ENCODE measurements at regions of chr12 and their contacts with region 1.

Region 1: GRCh38 chr12:111427417-111428074 is 21.8 kb downstream of the SH2B3 start:
- DNase-seq: no peak
- H3K4me3 ChIP-seq: no peak overlapping the region
- H3K27ac ChIP-seq: no peak overlapping the region
- H3K4me1 ChIP-seq: peaks cover 55% of the 10 kb centered on the region
- H3K27me3 ChIP-seq: no peaks in the 10 kb centered on the region
- CTCF ChIP-seq: no peak

Region 2: DNA sequence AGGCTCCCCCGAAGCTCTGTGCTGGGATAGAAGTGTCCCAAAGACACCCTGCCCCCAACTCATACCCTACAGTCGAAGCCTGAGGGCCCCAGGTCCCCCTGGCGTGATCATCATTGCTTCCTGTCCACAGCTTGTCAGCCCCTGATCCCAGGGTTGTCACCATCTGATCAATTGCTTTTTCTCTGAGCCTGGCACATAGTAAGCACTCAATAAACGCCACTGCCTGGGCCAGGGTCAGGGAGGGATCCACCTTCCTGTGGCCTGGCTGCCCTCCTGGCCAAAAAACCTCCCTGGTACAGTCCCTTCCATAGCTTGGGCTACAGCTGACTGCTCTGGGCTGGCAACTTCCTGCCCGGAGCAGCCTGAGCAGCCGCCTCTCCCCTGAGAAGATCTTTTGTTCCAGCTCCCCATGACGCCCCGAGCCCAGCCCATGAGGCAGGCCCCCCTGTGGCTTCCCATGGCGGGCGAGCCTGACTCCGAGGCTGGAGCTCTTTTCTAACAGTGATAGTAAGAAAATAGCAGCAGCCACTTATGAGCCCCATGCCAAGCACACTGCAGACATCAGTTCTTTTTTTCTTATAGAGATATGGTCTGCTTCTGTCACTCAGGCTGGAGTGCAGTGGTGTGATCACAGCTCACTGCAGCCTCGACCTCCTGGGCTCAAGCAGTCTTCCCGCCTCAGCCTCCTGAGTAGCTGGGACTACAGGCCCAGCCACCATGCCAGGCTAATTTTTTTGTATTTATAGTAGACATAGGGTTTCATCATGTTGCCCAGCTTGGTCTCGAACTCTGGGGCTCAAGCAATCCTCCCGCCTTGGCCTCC is 15.3 kb before region 1 on chr12:
- CTCF ChIA-PET with region 1: no interaction called
- POLR2A ChIA-PET with region 1: interaction called, 15 read pairs
- intact Hi-C with region 1: no loop called
- DNase-seq: peak; percentile 96
- H3K4me3 ChIP-seq: peak overlapping the region; percentile 15
- H3K27ac ChIP-seq: peak overlapping the region; percentile 91
- H3K4me1 ChIP-seq: peaks cover 68% of the 10 kb centered on the region
- H3K27me3 ChIP-seq: no peaks in the 10 kb centered on the region
- CTCF ChIP-seq: no peak

Region 3: DNA sequence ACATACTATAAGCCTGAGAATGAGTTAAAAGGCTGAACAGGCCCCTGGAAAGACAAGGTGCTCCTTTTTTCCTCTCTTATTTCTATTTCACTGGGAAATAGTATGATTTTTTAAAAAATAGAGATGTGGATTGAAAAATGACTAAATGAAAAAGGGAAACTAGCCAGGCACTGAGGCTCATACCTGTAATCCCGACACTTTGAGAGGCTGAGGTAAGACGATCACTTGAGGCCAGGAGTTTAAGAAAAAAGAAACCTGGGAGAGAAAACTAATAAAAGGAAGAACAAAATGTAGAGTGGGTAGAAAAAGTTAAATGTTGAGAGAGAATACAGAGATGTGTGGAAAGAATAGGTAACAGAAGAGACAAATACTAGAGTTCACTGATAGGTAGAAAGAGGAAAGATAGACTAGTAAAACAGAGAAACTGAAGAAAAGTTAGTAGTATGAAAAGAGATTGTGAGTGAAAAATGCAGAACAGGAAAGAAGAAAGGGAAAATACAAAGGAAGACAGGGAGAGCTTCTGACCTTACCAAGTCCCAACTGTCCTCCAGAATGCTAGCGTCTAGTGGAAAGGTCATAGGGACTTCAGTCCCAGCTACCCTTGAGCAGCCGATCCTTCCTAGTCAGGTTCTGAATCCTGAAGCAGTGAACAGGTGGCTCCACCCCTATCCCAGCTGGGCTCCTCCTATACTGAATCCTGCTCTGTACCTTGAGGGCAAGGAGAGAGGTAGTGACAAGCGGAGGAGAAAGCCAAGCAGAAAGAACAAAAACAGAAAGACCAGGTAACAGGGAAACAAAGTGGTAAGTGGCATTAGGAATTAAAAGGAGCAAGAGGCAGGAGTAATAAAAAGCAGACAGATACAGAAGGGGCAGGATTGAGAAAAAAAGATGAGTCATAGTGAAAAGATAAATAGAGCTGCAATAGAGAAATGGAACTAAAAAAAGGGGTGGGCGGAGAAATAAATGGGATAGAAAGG is 578.2 kb after region 1 on chr12:
- CTCF ChIA-PET with region 1: no interaction called
- POLR2A ChIA-PET with region 1: no interaction called
- intact Hi-C with region 1: no loop called
- DNase-seq: no peak
- H3K4me3 ChIP-seq: no peak overlapping the region
- H3K27ac ChIP-seq: no peak overlapping the region
- H3K4me1 ChIP-seq: peaks cover 13% of the 10 kb centered on the region
- H3K27me3 ChIP-seq: no peaks in the 10 kb centered on the region
- CTCF ChIP-seq: no peak

Measured in A673 (cell line).